Sigmoid colon (tissue), 7 donors: ENCODE measurements at regions of chrX and their contacts with region 1.

Region 1: GRCh38 chrX:149950681-149951080 is 12.4 kb upstream of the EOLA2 start:
- DNase-seq: no peak
- H3K4me3 ChIP-seq: no peak overlapping the region
- H3K27ac ChIP-seq: peak overlapping the region in 2 of 4 donors; percentile 5 to 47
- H3K4me1 ChIP-seq: peaks cover 0 to 5% (median 2%) of the 10 kb centered on the region in 4 donors
- H3K27me3 ChIP-seq: no peaks in the 10 kb centered on the region
- CTCF ChIP-seq: peak in 3 of 4 experiments; percentile 5 to 38 (median 28)
- EP300 ChIP-seq: no peak
- POLR2A ChIP-seq: no peak

Region 2: DNA sequence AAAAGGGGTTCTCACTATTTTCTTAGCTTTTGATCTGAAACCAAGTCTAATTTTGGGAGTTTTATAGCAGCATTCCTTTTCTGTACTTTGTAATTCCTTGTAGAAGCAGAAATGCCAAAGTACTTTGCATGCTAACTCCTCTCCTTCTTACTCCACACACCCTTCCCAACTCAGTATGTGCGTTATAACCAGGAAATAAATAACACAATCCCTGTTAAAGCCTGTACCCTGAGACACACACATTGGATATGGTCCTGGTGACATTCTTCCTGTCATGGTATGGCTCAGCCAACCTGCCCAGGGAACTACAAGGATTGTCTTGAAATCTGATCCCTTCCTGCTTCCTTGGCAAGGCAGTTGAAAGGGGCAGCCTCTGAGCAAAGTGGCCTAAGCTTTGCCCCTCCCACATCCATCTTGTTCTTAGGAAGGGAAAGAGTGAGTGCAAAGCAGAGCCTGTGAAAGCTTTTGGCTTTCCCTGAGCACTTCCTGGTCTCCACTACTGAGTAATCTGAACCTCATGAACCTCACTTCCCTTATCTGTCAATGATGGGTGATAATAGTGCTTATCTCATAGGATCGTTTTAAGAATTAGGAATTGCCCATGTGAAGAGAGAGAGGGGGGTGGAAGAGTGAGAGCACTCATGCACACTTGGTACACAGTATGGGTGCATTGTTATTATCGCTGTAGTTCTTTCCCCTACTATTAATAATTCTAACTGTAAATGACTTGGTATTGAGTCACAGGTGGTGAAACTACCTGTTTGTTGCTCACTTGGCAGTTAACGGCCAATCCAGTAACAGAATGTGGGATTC is 1341.0 kb before region 1 on chrX:
- intact Hi-C with region 1: no loop called
- DNase-seq: no peak
- H3K4me3 ChIP-seq: no peak overlapping the region
- H3K27ac ChIP-seq: no peak overlapping the region
- H3K4me1 ChIP-seq: no peaks in the 10 kb centered on the region
- H3K27me3 ChIP-seq: no peaks in the 10 kb centered on the region
- CTCF ChIP-seq: no peak
- EP300 ChIP-seq: no peak
- POLR2A ChIP-seq: no peak

Region 3: DNA sequence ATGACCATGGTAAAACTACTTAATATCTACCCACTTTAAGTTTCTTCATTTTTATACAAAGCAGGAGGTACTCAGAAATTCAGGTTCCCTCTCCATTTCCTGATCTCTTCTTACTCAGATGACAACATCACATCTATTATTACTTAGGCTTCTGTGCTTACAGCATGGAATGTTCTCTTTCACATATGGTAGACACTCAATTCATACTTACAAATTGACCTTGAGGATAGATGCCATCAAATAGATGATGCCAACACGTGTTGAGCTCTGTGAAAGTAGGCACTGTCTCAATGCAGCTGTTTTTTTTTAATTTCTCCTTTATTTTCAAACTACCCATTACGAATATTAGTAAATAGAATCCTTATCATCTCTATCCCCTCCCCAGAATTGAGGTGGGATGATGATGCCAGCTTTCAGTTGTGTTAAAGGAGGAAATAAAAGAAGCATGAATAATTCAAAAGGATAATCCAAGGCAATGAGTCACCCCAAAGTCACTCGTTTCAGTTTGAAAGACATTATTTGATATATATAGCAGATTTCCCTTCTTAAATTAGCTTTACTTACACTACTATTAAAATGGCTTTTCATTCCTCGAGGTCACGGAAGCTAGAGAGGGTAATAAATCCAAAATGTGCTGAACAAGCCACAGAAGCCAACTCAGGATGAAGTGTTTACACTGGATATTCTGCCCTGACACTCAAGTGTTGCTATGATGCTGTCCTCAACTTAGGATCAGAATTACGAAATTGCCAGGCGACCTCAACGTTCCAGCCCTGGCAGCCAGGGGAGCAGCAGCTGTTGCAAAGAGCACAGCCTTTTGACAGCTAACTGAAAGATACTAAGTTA is 111.8 kb after region 1 on chrX:
- intact Hi-C with region 1: no loop called
- DNase-seq: no peak
- H3K4me3 ChIP-seq: no peak overlapping the region
- H3K27ac ChIP-seq: no peak overlapping the region
- H3K4me1 ChIP-seq: no peaks in the 10 kb centered on the region
- H3K27me3 ChIP-seq: no peaks in the 10 kb centered on the region
- CTCF ChIP-seq: no peak
- EP300 ChIP-seq: no peak
- POLR2A ChIP-seq: no peak

Region 4: DNA sequence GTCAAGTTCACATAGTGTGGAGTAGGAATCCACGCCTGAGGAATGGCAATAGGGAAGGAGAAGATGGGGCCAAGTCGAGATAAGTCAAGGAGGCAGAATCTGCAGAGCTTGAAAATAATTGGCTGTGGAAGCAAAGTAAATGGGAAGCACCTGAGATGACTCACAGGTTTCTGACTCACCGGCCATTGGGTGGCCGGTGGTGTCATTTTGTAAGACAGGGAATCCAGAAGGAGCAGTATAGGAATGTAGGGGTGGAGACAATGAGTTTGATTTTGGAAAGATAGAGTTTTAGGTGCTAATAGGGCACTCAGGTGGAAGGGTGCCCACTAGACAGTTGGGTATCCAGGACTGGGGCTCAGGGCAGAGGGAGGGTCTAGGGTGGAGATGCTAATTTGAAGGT is 211.5 kb after region 1 on chrX:
- intact Hi-C with region 1: no loop called
- DNase-seq: no peak
- H3K4me3 ChIP-seq: no peak overlapping the region
- H3K27ac ChIP-seq: no peak overlapping the region
- H3K4me1 ChIP-seq: no peaks in the 10 kb centered on the region
- H3K27me3 ChIP-seq: no peaks in the 10 kb centered on the region
- CTCF ChIP-seq: no peak
- EP300 ChIP-seq: no peak
- POLR2A ChIP-seq: no peak

Region 5: GRCh38 chrX:150486011-150486410 is 535.3 kb after region 1 on chrX:
- intact Hi-C with region 1: loop called (anchors 10 kb)
- DNase-seq: peak; percentile 74
- H3K4me3 ChIP-seq: no peak overlapping the region
- H3K27ac ChIP-seq: no peak overlapping the region
- H3K4me1 ChIP-seq: no peaks in the 10 kb centered on the region
- H3K27me3 ChIP-seq: no peaks in the 10 kb centered on the region
- CTCF ChIP-seq: peak in 3 of 4 experiments; percentile 21 to 46 (median 39)
- EP300 ChIP-seq: no peak
- POLR2A ChIP-seq: no peak